Mammary epithelial cell (primary cell): ENCODE measurements at regions of chr1 and their contacts with region 1.

Region 1: GRCh38 chr1:94247138-94248094 is 10.0 kb upstream of the ARHGAP29 start:
- DNase-seq: peak; percentile 76
- H3K4me3 ChIP-seq: peak overlapping the region; percentile 61 to 82 (median 78)
- H3K27ac ChIP-seq: peak overlapping the region; percentile 86
- H3K4me1 ChIP-seq: peaks cover 26% of the 10 kb centered on the region
- H3K27me3 ChIP-seq: no peaks in the 10 kb centered on the region
- CTCF ChIP-seq: no peak

Region 2: GRCh38 chr1:94258873-94259331 is 11.5 kb after region 1 on chr1:
- CTCF ChIA-PET with region 1: no interaction called
- dilution Hi-C with region 1: no loop called
- in situ Hi-C with region 1: no loop called
- intact Hi-C with region 1: loop called (anchors 1 kb)
- DNase-seq: peak; percentile 94
- H3K4me3 ChIP-seq: no peak overlapping the region
- H3K27ac ChIP-seq: peak overlapping the region; percentile 82
- H3K4me1 ChIP-seq: peaks cover 48% of the 10 kb centered on the region
- H3K27me3 ChIP-seq: no peaks in the 10 kb centered on the region
- CTCF ChIP-seq: no peak

Region 3: GRCh38 chr1:94270801-94271203 is 23.4 kb after region 1 on chr1:
- CTCF ChIA-PET with region 1: no interaction called
- dilution Hi-C with region 1: no loop called
- in situ Hi-C with region 1: no loop called
- intact Hi-C with region 1: loop called (anchors 2 kb)
- DNase-seq: peak; percentile 90
- H3K4me3 ChIP-seq: no peak overlapping the region
- H3K27ac ChIP-seq: peak overlapping the region; percentile 78
- H3K4me1 ChIP-seq: peaks cover 43% of the 10 kb centered on the region
- H3K27me3 ChIP-seq: no peaks in the 10 kb centered on the region
- CTCF ChIP-seq: no peak

Region 4: DNA sequence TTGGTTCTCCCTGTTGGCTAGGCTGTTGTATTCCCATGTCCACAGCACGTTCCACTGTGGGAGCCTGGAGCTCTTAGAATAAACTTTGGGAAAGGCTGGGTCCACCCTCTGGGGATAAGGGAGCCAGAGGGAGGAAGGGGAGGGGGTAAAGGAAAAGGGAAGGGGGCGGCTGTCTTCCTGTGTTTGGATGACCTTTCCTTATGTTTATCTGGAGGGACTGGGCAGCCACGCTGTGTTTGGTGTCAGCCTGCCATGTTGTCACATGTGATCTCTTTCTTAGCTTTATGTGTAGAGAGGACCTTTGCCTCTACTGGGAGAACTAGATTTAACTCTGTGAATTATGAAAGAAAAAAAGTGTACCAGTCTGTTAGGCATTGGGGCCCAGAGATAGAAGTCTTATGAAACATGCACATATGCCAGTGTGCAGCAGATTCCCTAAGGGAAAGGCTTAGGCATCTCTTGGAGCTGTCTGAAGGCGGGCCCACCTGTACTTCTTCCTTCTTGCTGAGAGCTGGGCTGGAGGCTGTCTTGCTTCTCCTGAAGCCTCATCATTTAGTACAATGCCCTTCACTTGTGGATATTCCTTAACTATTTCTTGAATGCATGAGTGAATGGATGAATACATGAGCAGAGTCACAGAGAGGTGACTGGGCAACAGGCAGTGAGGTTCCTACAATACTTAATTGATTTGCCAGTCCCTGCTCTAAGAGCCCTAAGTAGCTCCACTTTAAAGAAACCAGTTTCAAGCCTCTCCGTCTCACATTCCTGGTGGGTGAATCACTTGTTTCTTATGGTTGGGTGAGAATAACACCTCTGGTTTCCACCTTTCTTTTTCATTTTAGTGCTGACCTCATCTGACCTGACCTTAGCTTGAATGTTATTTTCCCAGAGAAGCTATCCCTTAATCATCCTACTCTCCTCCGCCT is 52.5 kb after region 1 on chr1:
- CTCF ChIA-PET with region 1: no interaction called
- dilution Hi-C with region 1: no loop called
- in situ Hi-C with region 1: no loop called
- intact Hi-C with region 1: loop called (anchors 1 kb)
- DNase-seq: peak; percentile 96
- H3K4me3 ChIP-seq: no peak overlapping the region
- H3K27ac ChIP-seq: peak overlapping the region; percentile 70
- H3K4me1 ChIP-seq: peaks cover 44% of the 10 kb centered on the region
- H3K27me3 ChIP-seq: no peaks in the 10 kb centered on the region
- CTCF ChIP-seq: no peak

Region 5: DNA sequence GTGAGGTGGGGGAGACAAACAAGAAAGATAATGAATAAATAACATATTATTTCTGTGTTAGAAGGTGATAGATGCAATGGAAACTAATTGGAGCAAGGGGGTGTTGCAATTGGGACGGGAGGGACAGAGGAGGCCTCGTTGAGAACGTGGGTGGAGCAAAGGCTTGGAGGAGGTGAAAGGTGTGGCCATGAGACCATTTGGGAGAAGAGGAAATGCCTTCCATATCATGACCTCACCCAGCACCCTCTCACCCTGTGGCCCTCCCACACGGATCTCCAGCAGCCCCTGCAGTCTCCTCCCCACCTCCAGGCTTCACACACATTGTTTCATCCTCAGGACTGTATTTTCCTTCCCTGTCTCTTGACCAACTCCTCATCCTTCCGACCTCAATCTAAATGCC is 75.3 kb after region 1 on chr1:
- CTCF ChIA-PET with region 1: interaction called, 8 read pairs
- dilution Hi-C with region 1: loop called (anchors 5 kb)
- in situ Hi-C with region 1: loop called in 1 of 2 experiments (anchors 5 kb)
- intact Hi-C with region 1: loop called (anchors 1 kb)
- DNase-seq: peak; percentile 62
- H3K4me3 ChIP-seq: no peak overlapping the region
- H3K27ac ChIP-seq: peak overlapping the region; percentile 93
- H3K4me1 ChIP-seq: peaks cover 58% of the 10 kb centered on the region
- H3K27me3 ChIP-seq: no peaks in the 10 kb centered on the region
- CTCF ChIP-seq: no peak

Region 6: DNA sequence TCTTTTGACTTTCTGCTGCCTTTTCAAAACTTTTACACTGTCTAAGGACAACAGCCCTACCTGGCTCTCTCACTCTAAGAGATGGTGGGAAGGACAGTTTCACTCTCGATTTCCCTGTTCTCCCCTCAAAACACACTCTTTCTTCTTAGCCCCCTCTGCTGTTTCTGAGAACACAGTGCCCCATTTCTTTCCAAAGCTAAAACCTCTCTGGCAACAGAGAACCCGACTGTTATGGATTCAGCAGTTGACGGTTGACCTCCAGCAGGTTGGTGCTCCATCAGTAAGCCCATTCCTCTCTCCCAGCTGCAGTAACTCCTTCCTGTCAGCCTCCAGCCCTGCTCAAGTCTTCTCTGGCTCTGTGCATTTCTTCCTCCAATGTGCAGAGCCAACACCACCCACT is 82.6 kb after region 1 on chr1:
- CTCF ChIA-PET with region 1: interaction called, 8 read pairs
- dilution Hi-C with region 1: no loop called
- in situ Hi-C with region 1: no loop called
- intact Hi-C with region 1: loop called (anchors 1 kb)
- DNase-seq: no peak
- H3K4me3 ChIP-seq: no peak overlapping the region
- H3K27ac ChIP-seq: no peak overlapping the region
- H3K4me1 ChIP-seq: peaks cover 45% of the 10 kb centered on the region
- H3K27me3 ChIP-seq: no peaks in the 10 kb centered on the region
- CTCF ChIP-seq: peak; percentile 28 to 44